Endothelial cell of umbilical vein (primary cell): ENCODE measurements at regions of chr20 and their contacts with region 1.

Region 1: DNA sequence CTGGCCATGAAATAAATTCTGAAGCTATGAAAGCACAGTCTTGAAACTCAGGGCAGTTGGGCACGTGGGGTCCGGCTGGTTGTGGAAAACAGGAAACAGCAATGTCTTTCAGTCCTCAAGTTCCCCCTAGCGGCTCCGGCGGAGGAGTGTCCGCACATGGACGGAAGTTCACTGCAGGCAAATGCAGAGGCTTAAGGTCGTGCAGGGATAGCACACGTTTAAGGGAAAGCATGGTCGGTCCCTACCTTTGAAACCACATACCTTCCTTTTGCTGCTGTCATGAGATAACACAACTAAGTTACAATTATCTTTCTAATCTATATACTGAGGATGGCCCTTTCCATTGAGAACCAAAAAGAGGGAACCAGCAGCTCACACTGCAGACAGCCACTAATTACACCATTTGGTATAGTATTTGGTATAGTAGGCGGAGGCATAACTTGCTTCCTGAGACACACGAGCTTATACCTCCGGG is 52.6 kb upstream of the NFATC2 start:
- DNase-seq: peak; percentile 94
- H3K4me3 ChIP-seq: no peak overlapping the region
- H3K27ac ChIP-seq: peak overlapping the region; percentile 41
- H3K4me1 ChIP-seq: peaks cover 27% of the 10 kb centered on the region
- H3K27me3 ChIP-seq: no peaks in the 10 kb centered on the region
- CTCF ChIP-seq: peak; percentile 83 to 87
- POLR2A ChIP-seq: no peak

Region 2: DNA sequence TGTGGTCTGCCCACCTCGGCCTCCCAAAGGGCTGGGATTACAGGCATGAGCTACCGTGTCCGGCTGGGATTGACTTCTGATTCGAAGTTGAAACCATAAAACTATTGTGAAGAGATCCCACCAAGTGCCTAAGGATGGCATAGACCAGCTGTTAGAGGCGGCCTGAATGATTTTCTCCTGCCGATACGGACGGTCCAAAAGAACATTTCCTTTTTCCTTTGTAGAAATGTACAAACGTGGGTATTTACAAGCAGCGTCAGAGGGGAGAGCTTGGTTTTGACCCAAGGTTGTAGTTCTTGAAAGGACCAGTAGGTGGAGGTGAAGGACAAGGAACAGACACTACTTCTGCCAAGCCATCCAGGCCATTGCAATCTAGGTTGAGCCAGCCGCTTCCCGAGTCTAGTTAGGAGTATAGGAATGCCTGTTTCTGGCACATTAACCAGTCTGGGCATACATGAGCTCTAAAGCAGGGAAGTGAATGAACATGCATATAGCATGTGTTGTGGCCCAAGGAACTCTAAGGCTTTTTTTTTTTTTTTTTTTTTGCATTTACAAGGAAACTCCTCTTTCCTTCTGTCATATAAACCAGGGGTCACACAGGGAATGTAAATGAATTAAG is 607.4 kb before region 1 on chr20:
- CTCF ChIA-PET with region 1: interaction called, 46 read pairs
- POLR2A ChIA-PET with region 1: no interaction called
- dilution Hi-C with region 1: no loop called
- intact Hi-C with region 1: no loop called
- DNase-seq: peak; percentile 73
- H3K4me3 ChIP-seq: no peak overlapping the region
- H3K27ac ChIP-seq: no peak overlapping the region
- H3K4me1 ChIP-seq: no peaks in the 10 kb centered on the region
- H3K27me3 ChIP-seq: peaks cover 1 to 2% of the 10 kb centered on the region in 2 experiments
- CTCF ChIP-seq: peak; percentile 60 to 82
- POLR2A ChIP-seq: no peak

Region 3: DNA sequence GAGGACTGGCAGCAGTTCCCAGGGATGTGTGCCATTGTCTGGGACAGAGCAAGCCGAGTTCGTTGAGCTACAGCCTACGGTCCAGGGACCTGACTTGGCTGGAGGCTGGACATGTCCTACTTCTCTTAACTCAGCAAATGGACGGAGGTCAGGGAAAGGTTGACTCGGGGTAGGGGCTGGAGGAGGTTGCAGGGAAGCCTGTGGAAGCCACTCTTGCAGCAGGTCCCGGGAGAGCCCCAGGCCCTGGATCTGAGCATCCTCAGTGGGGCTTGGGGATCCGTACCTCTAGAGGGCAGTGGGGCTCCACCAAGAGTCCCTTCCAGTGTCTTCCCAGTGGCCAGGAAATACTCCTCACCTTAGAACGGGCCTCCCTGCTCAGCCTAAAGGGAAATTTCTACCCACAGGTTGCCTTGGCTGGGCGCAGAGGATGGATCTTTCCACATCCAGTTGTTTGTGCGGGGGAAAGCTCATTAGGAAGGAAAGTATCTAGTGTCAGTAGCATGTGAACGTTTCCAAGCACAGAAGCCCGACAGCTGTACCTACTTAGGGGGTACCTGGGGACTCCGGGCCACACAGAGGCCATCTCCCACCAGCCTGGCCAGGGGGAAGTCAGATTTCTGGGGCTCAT is 222.8 kb before region 1 on chr20:
- CTCF ChIA-PET with region 1: interaction called, 99 read pairs
- POLR2A ChIA-PET with region 1: no interaction called
- dilution Hi-C with region 1: no loop called
- intact Hi-C with region 1: loop called (anchors 1 kb)
- DNase-seq: peak; percentile 73
- H3K4me3 ChIP-seq: no peak overlapping the region
- H3K27ac ChIP-seq: no peak overlapping the region
- H3K4me1 ChIP-seq: peaks cover 26% of the 10 kb centered on the region
- H3K27me3 ChIP-seq: no peaks in the 10 kb centered on the region
- CTCF ChIP-seq: peak; percentile 84 to 93
- POLR2A ChIP-seq: no peak

Region 4: GRCh38 chr20:51412333-51412871 is 182.7 kb before region 1 on chr20:
- CTCF ChIA-PET with region 1: interaction called, 12 read pairs
- POLR2A ChIA-PET with region 1: no interaction called
- dilution Hi-C with region 1: loop called (anchors 25 kb)
- intact Hi-C with region 1: loop called (anchors 1 kb)
- DNase-seq: peak; percentile 69
- H3K4me3 ChIP-seq: no peak overlapping the region
- H3K27ac ChIP-seq: peak overlapping the region; percentile 39
- H3K4me1 ChIP-seq: peaks cover 32% of the 10 kb centered on the region
- H3K27me3 ChIP-seq: no peaks in the 10 kb centered on the region
- CTCF ChIP-seq: no peak
- POLR2A ChIP-seq: no peak

Region 5: GRCh38 chr20:51487565-51488268 is 107.4 kb before region 1 on chr20:
- CTCF ChIA-PET with region 1: interaction called, 12 read pairs
- POLR2A ChIA-PET with region 1: no interaction called
- dilution Hi-C with region 1: no loop called
- intact Hi-C with region 1: loop called (anchors 1 kb)
- DNase-seq: peak; percentile 50
- H3K4me3 ChIP-seq: no peak overlapping the region
- H3K27ac ChIP-seq: peak overlapping the region; percentile 15
- H3K4me1 ChIP-seq: peaks cover 23% of the 10 kb centered on the region
- H3K27me3 ChIP-seq: no peaks in the 10 kb centered on the region
- CTCF ChIP-seq: no peak
- POLR2A ChIP-seq: no peak

Region 6: GRCh38 chr20:51547951-51548350 is 47.1 kb before region 1 on chr20:
- CTCF ChIA-PET with region 1: interaction called, 42 read pairs
- POLR2A ChIA-PET with region 1: no interaction called
- dilution Hi-C with region 1: no loop called
- intact Hi-C with region 1: no loop called
- DNase-seq: no peak
- H3K4me3 ChIP-seq: no peak overlapping the region
- H3K27ac ChIP-seq: no peak overlapping the region
- H3K4me1 ChIP-seq: peaks cover 3% of the 10 kb centered on the region
- H3K27me3 ChIP-seq: peaks cover 0 to 5% of the 10 kb centered on the region in 2 experiments
- CTCF ChIP-seq: no peak
- POLR2A ChIP-seq: no peak

Region 7: DNA sequence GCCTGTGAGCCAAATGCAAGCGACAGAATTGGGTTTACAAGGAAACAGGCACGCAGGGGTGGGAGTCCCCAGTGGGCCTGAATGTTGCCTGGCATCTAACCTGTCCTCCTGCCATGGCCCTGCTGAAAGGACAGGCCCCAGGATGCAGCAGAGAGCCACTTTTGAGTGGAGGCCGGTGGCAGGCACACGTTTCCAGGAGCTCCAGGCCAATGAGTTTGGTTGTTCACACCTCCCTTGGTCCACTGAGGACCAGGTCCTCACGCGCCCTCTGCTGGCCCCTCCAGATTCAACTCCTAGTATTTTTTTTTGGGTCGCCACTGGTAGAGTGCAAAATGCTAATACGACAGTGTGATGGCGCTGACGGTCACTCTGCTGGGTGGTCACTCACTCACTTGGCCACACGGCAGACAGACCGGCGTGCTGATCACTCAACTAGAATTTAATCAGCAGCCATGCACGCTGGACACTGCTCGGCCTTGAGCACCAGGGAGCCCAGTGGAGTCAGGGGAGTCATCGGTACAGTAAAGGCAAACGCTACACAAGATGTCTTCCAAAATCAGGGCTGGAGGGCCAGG is 29.1 kb after region 1 on chr20:
- CTCF ChIA-PET with region 1: interaction called, 18 read pairs
- POLR2A ChIA-PET with region 1: no interaction called
- dilution Hi-C with region 1: no loop called
- intact Hi-C with region 1: loop called (anchors 1 kb)
- DNase-seq: peak; percentile 81
- H3K4me3 ChIP-seq: no peak overlapping the region
- H3K27ac ChIP-seq: peak overlapping the region; percentile 41
- H3K4me1 ChIP-seq: peaks cover 14% of the 10 kb centered on the region
- H3K27me3 ChIP-seq: no peaks in the 10 kb centered on the region
- CTCF ChIP-seq: peak; percentile 82 to 84
- POLR2A ChIP-seq: no peak